Heart right ventricle (tissue), 16 donors: ENCODE measurements at regions of chr10 and their contacts with region 1.

Region 1: DNA sequence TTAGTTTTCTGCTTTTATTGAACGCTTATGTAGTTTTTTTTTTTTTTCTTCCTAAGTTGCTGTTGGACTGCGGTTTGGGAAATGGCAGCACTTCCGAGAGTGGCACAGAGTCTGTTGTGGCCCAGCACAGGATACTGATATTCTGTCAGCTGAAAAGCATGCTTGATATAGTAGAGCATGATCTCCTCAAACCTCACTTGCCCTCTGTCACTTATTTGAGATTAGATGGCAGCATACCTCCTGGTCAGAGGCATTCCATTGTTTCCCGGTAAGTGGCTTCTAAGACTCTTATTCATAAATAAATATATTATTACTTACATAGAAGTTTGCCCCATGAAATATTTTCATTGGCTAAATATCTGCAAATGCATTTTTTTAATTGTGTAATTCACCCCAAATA is 101.1 kb downstream of the BTAF1 start:
- DNase-seq: no peak
- ATAC-seq: peak in 5 of 8 donors; percentile 34 to 79 (median 42)
- H3K4me3 ChIP-seq: no peak overlapping the region
- H3K27ac ChIP-seq: no peak overlapping the region
- H3K4me1 ChIP-seq: peaks cover 0 to 5% (median 0%) of the 10 kb centered on the region in 9 donors
- H3K27me3 ChIP-seq: no peaks in the 10 kb centered on the region
- CTCF ChIP-seq: no peak

Region 2: GRCh38 chr10:91987397-91988037 is 37.2 kb before region 1 on chr10:
- intact Hi-C with region 1: no loop called
- DNase-seq: no peak
- ATAC-seq: no peak
- H3K4me3 ChIP-seq: no peak overlapping the region
- H3K27ac ChIP-seq: no peak overlapping the region
- H3K4me1 ChIP-seq: peaks cover 0 to 10% (median 0%) of the 10 kb centered on the region in 9 donors
- H3K27me3 ChIP-seq: no peaks in the 10 kb centered on the region
- CTCF ChIP-seq: no peak

Region 3: GRCh38 chr10:92003258-92003657 is 21.4 kb before region 1 on chr10:
- intact Hi-C with region 1: loop called in 1 of 10 experiments (anchors 1 kb)
- DNase-seq: no peak
- ATAC-seq: no peak
- H3K4me3 ChIP-seq: no peak overlapping the region
- H3K27ac ChIP-seq: no peak overlapping the region
- H3K4me1 ChIP-seq: no peaks in the 10 kb centered on the region
- H3K27me3 ChIP-seq: no peaks in the 10 kb centered on the region
- CTCF ChIP-seq: no peak

Region 4: GRCh38 chr10:92074126-92074887 is 49.6 kb after region 1 on chr10:
- intact Hi-C with region 1: no loop called
- DNase-seq: no peak
- ATAC-seq: no peak
- H3K4me3 ChIP-seq: no peak overlapping the region
- H3K27ac ChIP-seq: no peak overlapping the region
- H3K4me1 ChIP-seq: peaks cover 0 to 7% (median 0%) of the 10 kb centered on the region in 9 donors
- H3K27me3 ChIP-seq: no peaks in the 10 kb centered on the region
- CTCF ChIP-seq: peak in 6 of 9 donors; percentile 17 to 37 (median 28)